Natural killer cell (primary cell): ENCODE measurements at regions of chr2 and their contacts with region 1.

Region 1: DNA sequence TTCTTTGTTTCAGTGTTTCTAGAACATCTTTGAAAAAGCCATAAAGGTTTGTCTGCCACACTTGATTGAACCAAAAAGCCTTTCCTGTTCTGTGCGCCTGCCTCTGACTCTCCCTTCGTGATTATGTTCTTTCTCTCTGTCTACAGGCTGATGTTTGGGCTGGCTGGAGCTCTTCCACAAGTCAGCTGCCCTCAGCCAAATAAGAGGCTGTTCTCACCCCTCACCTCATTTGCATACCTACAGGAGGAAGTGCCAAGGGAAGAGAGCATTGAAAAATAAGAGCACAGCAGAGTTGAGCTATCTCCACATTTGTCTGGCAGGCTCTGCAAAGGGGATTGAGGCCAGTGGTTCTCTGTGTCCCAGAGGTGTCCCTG is 15.8 kb downstream of the INPP5D start:
- DNase-seq: peak; percentile 27 to 77
- ATAC-seq: peak; percentile 44 to 67 (median 55)
- H3K4me3 ChIP-seq: peak overlapping the region; percentile 15
- H3K4me3 Mint-ChIP-seq: no peak overlapping the region
- H3K27ac ChIP-seq: peak overlapping the region; percentile 80
- H3K27ac Mint-ChIP-seq: no peak overlapping the region
- H3K4me1 ChIP-seq: peaks cover 80% of the 10 kb centered on the region
- H3K4me1 Mint-ChIP-seq: peaks cover 36 to 39% of the 10 kb centered on the region in 2 donors
- H3K27me3 ChIP-seq: no peaks in the 10 kb centered on the region
- H3K27me3 Mint-ChIP-seq: no peaks in the 10 kb centered on the region
- CTCF ChIP-seq: no peak

Region 2: GRCh38 chr2:232981381-232982360 is 94.3 kb before region 1 on chr2:
- intact Hi-C with region 1: no loop called
- DNase-seq: no peak
- ATAC-seq: no peak
- H3K4me3 ChIP-seq: no peak overlapping the region
- H3K4me3 Mint-ChIP-seq: no peak overlapping the region
- H3K27ac ChIP-seq: no peak overlapping the region
- H3K27ac Mint-ChIP-seq: no peak overlapping the region
- H3K4me1 ChIP-seq: no peaks in the 10 kb centered on the region
- H3K4me1 Mint-ChIP-seq: no peaks in the 10 kb centered on the region
- H3K27me3 ChIP-seq: no peaks in the 10 kb centered on the region
- H3K27me3 Mint-ChIP-seq: peaks cover 0 to 14% of the 10 kb centered on the region in 2 donors
- CTCF ChIP-seq: no peak

Region 3: DNA sequence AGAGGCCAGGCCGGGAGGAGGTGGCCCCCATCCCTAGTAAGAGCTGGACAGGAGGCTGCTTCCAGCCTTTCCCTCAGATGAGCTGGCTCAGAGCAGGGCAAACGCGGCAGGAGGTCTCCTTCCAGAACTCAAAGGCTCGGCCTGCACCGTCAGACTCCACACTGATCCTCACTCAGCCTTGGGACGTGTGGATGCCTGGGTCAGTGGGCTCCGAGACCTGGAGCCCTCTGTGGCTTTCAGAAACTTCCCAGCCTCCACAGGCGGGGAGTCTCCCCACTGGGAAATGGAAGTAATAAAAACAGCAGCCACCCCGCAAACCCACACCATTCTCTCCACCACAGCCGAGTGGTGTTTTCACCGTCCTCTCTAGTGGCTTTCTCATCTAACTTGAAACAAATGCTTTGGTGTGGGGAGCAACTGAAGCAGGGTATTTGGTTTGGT is 38.5 kb after region 1 on chr2:
- intact Hi-C with region 1: loop called (anchors 5 kb)
- DNase-seq: peak; percentile 37 to 64
- ATAC-seq: peak; percentile 51 to 80 (median 64)
- H3K4me3 ChIP-seq: no peak overlapping the region
- H3K4me3 Mint-ChIP-seq: peak overlapping the region; percentile 72
- H3K27ac ChIP-seq: peak overlapping the region; percentile 68
- H3K27ac Mint-ChIP-seq: peak overlapping the region; percentile 89
- H3K4me1 ChIP-seq: peaks cover 81% of the 10 kb centered on the region
- H3K4me1 Mint-ChIP-seq: peaks cover 79 to 81% of the 10 kb centered on the region in 2 donors
- H3K27me3 ChIP-seq: no peaks in the 10 kb centered on the region
- H3K27me3 Mint-ChIP-seq: no peaks in the 10 kb centered on the region
- CTCF ChIP-seq: no peak